Common myeloid progenitor, CD34-positive (primary cell): ENCODE measurements at regions of chr4 and their contacts with region 1.

Region 1: GRCh38 chr4:88523325-88524129 is at the start of gene PYURF:
- DNase-seq: peak; percentile 79 to 85 (median 82)
- H3K4me3 ChIP-seq: peak within 1 kb of the TSS; percentile 61 to 96 (median 88)
- H3K27ac ChIP-seq: peak within 1 kb of the TSS; percentile 71 to 88
- H3K4me1 ChIP-seq: peaks cover 10 to 41% (median 18%) of the 10 kb centered on the region in 4 experiments
- H3K27me3 ChIP-seq: no peaks in the 10 kb centered on the region

Region 2: GRCh38 chr4:88497859-88498409 is 25.6 kb before region 1 on chr4:
- CTCF ChIA-PET with region 1: no interaction called
- POLR2A ChIA-PET with region 1: no interaction called
- DNase-seq: no peak
- H3K4me3 ChIP-seq: no peak overlapping the region
- H3K27ac ChIP-seq: no peak overlapping the region
- H3K4me1 ChIP-seq: no peaks in the 10 kb centered on the region
- H3K27me3 ChIP-seq: no peaks in the 10 kb centered on the region

Region 3: DNA sequence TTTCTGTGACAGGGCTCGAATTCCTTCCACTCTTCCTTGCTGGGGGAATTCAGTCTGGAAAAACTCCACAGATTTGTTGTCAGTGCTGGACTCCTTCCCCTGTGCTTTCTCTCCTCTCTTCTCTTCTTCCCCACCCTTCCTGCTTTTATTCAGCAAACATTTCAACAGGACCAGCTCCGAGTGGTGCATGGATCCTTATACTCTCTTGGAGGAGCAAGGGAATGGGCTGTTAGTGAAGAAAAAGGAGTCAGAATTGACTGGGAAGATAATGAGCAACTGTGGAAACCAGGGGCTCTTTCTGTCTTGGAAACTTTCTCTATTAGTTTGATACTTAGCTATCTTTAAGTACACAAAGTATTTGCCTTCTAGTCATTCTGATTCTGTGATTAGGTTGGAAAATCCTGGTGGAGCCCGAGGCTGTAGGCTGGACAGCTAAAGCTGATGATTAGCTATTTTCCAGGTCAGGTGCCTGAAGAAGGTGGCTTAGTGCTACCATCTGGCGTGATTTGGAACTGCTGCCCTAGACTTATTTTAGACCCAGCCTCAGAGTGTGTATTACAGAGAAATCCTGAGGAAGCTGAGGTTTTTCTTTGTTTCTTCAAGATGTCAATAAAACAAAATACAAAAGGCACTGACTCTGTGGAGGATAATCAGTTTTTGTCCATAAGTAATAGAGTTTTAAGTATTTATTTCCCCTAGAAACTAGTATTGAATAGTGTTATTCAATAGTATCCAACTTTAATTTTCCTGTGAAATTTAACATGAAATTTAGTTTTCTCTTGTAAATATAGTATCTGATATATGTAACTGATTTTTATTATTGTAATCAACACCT is 135.7 kb after region 1 on chr4:
- CTCF ChIA-PET with region 1: interaction called, 149 read pairs
- POLR2A ChIA-PET with region 1: interaction called, 3 read pairs
- DNase-seq: peak; percentile 59 to 75 (median 70)
- H3K4me3 ChIP-seq: no peak overlapping the region
- H3K27ac ChIP-seq: no peak overlapping the region
- H3K4me1 ChIP-seq: peaks cover 0 to 5% (median 2%) of the 10 kb centered on the region in 4 experiments
- H3K27me3 ChIP-seq: no peaks in the 10 kb centered on the region